ENCODE measurements at regions of chr1 and their contacts with region 1.

Region 1: GRCh38 chr1:118049981-118050380 is 120.4 kb downstream of the WDR3 start:
- DNase-seq: no peak
- H3K4me3 ChIP-seq: no peak overlapping the region
- H3K27ac ChIP-seq: no peak overlapping the region
- H3K4me1 ChIP-seq: no peaks in the 10 kb centered on the region
- H3K27me3 ChIP-seq: no peaks in the 10 kb centered on the region
- CTCF ChIP-seq: no peak
- POLR2A ChIP-seq: no peak

Region 2: GRCh38 chr1:117447661-117448060 is 602.3 kb before region 1 on chr1:
- intact Hi-C with region 1: no loop called
- DNase-seq: no peak
- H3K4me3 ChIP-seq: no peak overlapping the region
- H3K27ac ChIP-seq: no peak overlapping the region
- H3K4me1 ChIP-seq: no peaks in the 10 kb centered on the region
- H3K27me3 ChIP-seq: no peaks in the 10 kb centered on the region
- CTCF ChIP-seq: no peak
- POLR2A ChIP-seq: no peak

Region 3: DNA sequence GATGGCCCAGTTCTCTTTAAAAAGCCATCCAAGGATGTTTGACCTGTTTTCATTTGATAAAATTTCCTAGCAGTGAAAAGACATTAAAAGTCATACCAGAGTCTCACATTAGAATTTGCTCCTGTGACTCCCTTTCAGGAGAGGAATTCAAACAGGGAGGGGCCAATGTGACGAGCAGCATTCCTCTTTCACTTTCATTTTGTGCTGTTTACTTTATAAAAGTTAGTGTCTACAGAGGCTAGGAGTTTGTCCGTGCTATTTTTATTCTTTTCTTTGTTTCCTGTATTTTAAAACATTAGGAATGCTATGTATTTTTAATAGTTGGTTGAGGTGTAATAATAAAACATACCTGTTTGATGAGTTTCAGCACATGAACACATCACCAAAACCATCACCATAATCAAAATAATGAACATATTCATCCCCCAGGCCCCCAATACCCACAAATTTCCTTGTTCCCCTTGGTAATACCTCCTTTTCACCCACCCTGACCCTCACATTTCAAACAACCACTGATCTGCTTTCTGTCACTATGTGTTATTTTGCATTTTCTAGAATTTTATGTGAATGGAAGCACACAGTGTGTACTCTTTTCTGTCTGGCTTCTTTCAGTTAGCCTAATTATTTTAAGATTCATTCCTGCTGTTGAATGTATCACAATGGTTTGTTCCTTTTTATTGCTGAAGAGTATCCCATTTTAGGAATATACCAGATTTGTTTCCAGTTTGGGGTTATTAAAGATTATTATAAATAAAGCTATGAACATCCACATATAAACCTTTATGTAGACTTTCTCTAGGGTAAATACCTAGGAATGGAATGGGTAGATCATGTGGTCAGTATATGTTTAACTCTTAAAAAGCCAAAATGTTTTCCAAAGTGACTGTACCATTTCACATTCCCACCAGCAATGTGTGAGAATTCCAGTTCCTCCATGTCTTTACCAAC is 314.7 kb before region 1 on chr1:
- intact Hi-C with region 1: no loop called
- DNase-seq: no peak
- H3K4me3 ChIP-seq: peak overlapping the region; percentile 30
- H3K27ac ChIP-seq: peak overlapping the region; percentile 81
- H3K4me1 ChIP-seq: peaks cover 16% of the 10 kb centered on the region
- H3K27me3 ChIP-seq: no peaks in the 10 kb centered on the region
- CTCF ChIP-seq: no peak
- POLR2A ChIP-seq: no peak

Region 4: GRCh38 chr1:118136187-118136941 is 86.4 kb after region 1 on chr1:
- intact Hi-C with region 1: no loop called
- DNase-seq: no peak
- H3K4me3 ChIP-seq: no peak overlapping the region
- H3K27ac ChIP-seq: no peak overlapping the region
- H3K4me1 ChIP-seq: no peaks in the 10 kb centered on the region
- H3K27me3 ChIP-seq: no peaks in the 10 kb centered on the region
- CTCF ChIP-seq: no peak
- POLR2A ChIP-seq: no peak

Region 5: GRCh38 chr1:119549719-119550132 is 1499.7 kb after region 1 on chr1:
- intact Hi-C with region 1: loop called (anchors 10 kb)
- DNase-seq: peak in 1 of 2 donors; percentile 79
- H3K4me3 ChIP-seq: no peak overlapping the region
- H3K27ac ChIP-seq: no peak overlapping the region
- H3K4me1 ChIP-seq: no peaks in the 10 kb centered on the region
- H3K27me3 ChIP-seq: no peaks in the 10 kb centered on the region
- CTCF ChIP-seq: no peak
- POLR2A ChIP-seq: no peak